ENCODE measurements at regions of chr15 and their contacts with region 1.

Region 1: GRCh38 chr15:78640840-78641719 is at the start of gene CHRNB4:
- DNase-seq: no peak
- ATAC-seq: peak; percentile 68
- total RNA-seq, gene CHRNB4: not detected

Region 2: GRCh38 chr15:78596514-78596913 is 44.6 kb before region 1 on chr15:
- intact Hi-C with region 1: no loop called
- DNase-seq: no peak
- ATAC-seq: no peak

Region 3: DNA sequence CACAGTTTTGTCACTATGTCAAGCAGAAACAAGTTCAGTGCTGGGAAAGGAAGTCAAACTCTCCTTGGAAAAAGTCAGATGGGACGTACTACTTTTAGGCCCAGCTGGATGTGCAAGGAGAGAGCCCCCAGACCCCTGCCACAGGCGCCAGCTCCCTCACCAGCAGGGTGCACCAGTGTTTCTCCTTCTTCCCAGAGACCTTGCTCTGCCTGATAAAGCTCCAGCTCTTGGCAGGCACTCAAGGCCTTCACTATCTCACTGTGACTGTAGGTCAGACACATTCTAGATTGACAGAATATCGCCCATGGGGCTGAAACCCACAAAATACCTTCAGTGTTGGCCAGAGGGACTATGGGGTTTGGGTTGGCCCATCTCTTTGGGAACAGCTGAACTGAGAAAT is 54.8 kb after region 1 on chr15:
- intact Hi-C with region 1: loop called (anchors 10 kb)
- DNase-seq: peak; percentile 49
- ATAC-seq: peak; percentile 81

Region 4: GRCh38 chr15:78708713-78709260 is 67.7 kb after region 1 on chr15:
- intact Hi-C with region 1: no loop called
- DNase-seq: no peak
- ATAC-seq: no peak